Dorsolateral prefrontal cortex (tissue), 120 donors: ENCODE measurements at regions of chr17 and their contacts with region 1.

Region 1: DNA sequence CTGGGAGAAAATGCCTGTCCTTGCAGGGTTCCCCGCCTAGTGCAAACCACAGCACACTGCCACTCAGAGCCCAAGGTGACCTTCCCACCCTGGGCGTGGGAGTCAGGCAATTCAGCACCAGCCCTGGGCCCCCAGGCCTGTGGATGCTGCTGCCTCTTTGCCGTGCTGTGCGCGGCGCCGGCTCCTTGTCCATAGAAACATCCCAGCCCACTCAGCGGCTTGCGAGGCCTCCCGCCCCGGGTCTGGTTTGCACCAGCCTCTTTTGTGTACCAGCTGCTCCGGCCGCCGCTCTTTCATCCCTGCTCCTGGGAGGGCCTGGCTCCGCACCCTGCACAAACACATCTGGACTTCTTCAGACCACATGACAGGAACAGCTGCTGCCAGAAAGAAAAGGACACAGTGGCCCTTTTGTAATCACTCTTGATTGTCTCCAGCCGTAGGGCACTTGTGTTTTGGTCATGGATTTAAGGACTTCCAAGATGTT is 75.4 kb upstream of the SDK2 start:
- DNase-seq: peak; percentile 9 to 94 (median 86)
- H3K4me3 ChIP-seq: peak overlapping the region in 4 of 59 donors; percentile 16 to 23 (median 18)
- H3K27ac ChIP-seq: peak overlapping the region in 55 of 59 donors; percentile 10 to 95 (median 81)
- H3K27me3 ChIP-seq: peaks cover 0 to 2% (median 0%) of the 10 kb centered on the region in 45 donors
- CTCF ChIP-seq: peak in 9 of 56 donors; percentile 9 to 44 (median 19)

Region 2: GRCh38 chr17:73770115-73770848 is 50.7 kb after region 1 on chr17:
- intact Hi-C with region 1: loop called in 1 of 2 experiments (anchors 5 kb)
- DNase-seq: peak; percentile 48 to 91 (median 84)
- H3K4me3 ChIP-seq: peak overlapping the region in 5 of 59 donors; percentile 1 to 32 (median 12)
- H3K27ac ChIP-seq: peak overlapping the region in 25 of 59 donors; percentile 0 to 75 (median 46)
- H3K27me3 ChIP-seq: no peaks in the 10 kb centered on the region
- CTCF ChIP-seq: peak in 6 of 56 donors; percentile 5 to 30 (median 14)

Region 3: GRCh38 chr17:73841431-73842060 is 121.9 kb after region 1 on chr17:
- intact Hi-C with region 1: loop called in 1 of 2 experiments (anchors 5 kb)
- DNase-seq: no peak
- H3K4me3 ChIP-seq: no peak overlapping the region
- H3K27ac ChIP-seq: no peak overlapping the region
- H3K27me3 ChIP-seq: peaks cover 0 to 6% (median 0%) of the 10 kb centered on the region in 45 donors
- CTCF ChIP-seq: peak in 54 of 56 donors; percentile 22 to 75 (median 54)

Region 4: GRCh38 chr17:74190172-74190571 is 470.5 kb after region 1 on chr17:
- intact Hi-C with region 1: no loop called
- DNase-seq: peak in 1 of 10 donors; percentile 30
- H3K4me3 ChIP-seq: no peak overlapping the region
- H3K27ac ChIP-seq: no peak overlapping the region
- H3K27me3 ChIP-seq: peaks cover 0 to 4% (median 0%) of the 10 kb centered on the region in 45 donors
- CTCF ChIP-seq: no peak